ENCODE measurements at regions of chr14 and their contacts with region 1.

Region 1: DNA sequence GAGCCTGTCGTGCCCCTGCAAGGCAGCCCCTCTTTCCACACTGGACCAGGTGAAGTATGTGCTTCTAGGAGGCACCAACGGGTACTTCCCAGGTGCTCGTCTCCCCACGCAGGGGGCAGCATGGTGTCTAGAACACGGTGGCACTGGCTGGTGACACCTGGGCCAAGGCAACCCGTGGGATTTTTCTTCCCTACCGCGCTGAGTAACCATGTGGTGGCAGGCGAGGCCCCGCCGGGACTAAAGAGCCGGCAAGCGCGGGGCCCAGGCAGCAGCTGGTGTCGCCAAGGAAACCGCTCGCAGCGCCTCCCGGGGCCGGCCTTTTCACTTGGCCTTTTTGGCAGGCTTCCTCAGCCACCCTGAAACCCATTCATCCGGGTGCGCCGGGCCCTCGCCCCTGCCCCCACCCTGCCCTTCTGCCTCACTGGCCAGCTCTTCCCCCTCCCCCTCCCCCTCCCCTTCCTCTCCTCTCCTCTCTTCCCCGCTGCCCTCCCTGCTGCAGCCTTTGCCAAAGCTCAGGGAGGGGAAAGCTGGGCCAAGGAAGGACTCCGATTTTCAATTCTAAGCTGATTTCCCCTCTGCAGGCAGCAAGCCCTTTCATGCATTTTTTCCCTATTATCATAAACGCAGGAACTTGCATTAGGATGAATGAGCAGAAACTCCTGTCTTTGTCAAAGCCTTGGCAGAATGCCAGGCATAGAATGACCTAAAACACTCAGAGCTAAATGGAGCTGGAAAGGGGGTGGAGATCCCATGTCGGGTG is 81.2 kb downstream of the IRF2BPL start:
- DNase-seq: peak; percentile 69
- ATAC-seq: peak; percentile 93
- H3K4me3 Mint-ChIP-seq: peak overlapping the region; percentile 19
- H3K27ac Mint-ChIP-seq: no peak overlapping the region
- H3K4me1 Mint-ChIP-seq: peaks cover 19% of the 10 kb centered on the region
- H3K27me3 Mint-ChIP-seq: no peaks in the 10 kb centered on the region
- CTCF ChIP-seq: no peak

Region 2: GRCh38 chr14:76829650-76830421 is 117.4 kb before region 1 on chr14:
- CTCF ChIA-PET with region 1: no interaction called
- POLR2A ChIA-PET with region 1: no interaction called
- intact Hi-C with region 1: no loop called
- DNase-seq: no peak
- ATAC-seq: no peak
- H3K4me3 Mint-ChIP-seq: no peak overlapping the region
- H3K27ac Mint-ChIP-seq: no peak overlapping the region
- H3K4me1 Mint-ChIP-seq: no peaks in the 10 kb centered on the region
- H3K27me3 Mint-ChIP-seq: peaks cover 17% of the 10 kb centered on the region
- CTCF ChIP-seq: no peak

Region 3: GRCh38 chr14:76918751-76919543 is 28.3 kb before region 1 on chr14:
- CTCF ChIA-PET with region 1: interaction called, 11 read pairs
- POLR2A ChIA-PET with region 1: no interaction called
- intact Hi-C with region 1: no loop called
- DNase-seq: no peak
- ATAC-seq: no peak
- H3K4me3 Mint-ChIP-seq: no peak overlapping the region
- H3K27ac Mint-ChIP-seq: no peak overlapping the region
- H3K4me1 Mint-ChIP-seq: peaks cover 25% of the 10 kb centered on the region
- H3K27me3 Mint-ChIP-seq: peaks cover 15% of the 10 kb centered on the region
- CTCF ChIP-seq: no peak

Region 4: DNA sequence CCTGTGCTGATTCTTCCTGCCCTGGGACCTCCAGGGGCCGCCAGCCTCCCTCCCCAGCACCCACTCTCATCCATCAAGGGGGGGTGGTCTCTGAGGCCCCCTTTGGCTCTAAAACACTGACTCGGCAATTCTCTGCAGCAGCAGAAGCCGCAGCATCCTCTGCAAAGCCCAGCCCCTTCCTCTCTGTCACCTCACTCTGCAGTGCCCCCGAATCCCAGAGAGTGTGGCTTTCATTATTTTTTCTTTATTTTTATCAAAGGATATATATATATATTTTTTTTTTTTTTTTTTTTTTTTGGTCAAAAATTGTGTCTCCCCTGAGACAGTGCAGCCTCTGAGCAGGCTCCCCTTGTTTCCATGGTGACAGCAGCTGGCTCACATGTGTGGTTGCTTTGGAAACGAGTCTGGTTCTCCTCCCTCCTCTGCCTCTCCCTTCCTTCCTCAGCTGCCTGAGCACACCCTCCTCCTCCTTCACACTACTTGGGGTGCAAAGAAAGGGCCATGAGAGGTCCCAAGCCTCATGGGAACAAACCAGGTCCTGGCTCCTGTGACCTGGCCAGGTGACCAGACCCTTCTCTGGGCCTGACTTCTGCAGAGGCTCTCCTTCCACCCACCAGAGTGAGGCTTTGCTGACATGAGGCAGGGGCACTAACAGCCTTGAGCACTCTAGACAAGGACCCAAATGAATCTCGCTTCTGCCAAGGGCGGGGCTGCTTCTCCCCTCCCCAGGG is 20.6 kb before region 1 on chr14:
- CTCF ChIA-PET with region 1: no interaction called
- POLR2A ChIA-PET with region 1: no interaction called
- intact Hi-C with region 1: loop called (anchors 2 kb)
- DNase-seq: no peak
- ATAC-seq: peak; percentile 88
- H3K4me3 Mint-ChIP-seq: no peak overlapping the region
- H3K27ac Mint-ChIP-seq: no peak overlapping the region
- H3K4me1 Mint-ChIP-seq: peaks cover 38% of the 10 kb centered on the region
- H3K27me3 Mint-ChIP-seq: peaks cover 10% of the 10 kb centered on the region
- CTCF ChIP-seq: no peak

Region 5: DNA sequence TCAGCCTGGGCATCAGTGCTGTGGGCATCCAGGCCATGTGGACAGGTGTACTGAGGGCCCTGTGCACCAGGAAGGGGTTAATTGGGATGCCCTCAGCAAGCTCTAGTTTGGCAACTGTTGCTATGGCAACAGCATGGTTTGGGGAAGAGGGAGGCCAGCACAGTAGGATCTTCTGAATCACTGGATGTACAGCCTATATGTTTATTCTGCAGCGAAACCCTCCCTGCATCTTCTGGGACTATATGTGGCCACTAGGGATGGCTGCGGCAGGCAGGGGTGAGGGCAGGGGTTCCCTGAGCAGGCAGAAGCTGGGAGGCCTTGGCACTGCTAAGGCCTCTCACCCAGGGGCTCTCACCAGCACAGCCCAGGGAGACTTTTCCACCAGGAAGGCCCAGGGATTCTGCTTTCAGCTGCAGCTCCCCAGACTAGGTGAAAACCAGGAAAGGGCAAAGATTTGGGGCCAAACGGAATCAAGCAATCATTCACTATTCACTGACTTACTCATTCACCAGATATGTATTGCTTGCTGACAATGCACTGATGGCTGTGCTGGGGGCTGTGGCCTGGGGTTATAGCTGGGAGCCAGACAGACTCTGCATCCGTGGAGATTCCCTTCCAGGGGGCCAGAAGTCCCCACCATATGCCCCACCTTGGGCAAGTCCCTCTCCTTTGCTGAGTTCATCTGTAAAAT is 38.4 kb after region 1 on chr14:
- CTCF ChIA-PET with region 1: no interaction called
- POLR2A ChIA-PET with region 1: no interaction called
- intact Hi-C with region 1: loop called (anchors 5 kb)
- DNase-seq: no peak
- ATAC-seq: no peak
- H3K4me3 Mint-ChIP-seq: no peak overlapping the region
- H3K27ac Mint-ChIP-seq: no peak overlapping the region
- H3K4me1 Mint-ChIP-seq: peaks cover 7% of the 10 kb centered on the region
- H3K27me3 Mint-ChIP-seq: no peaks in the 10 kb centered on the region
- CTCF ChIP-seq: no peak

Region 6: GRCh38 chr14:77053046-77053841 is 106.0 kb after region 1 on chr14:
- CTCF ChIA-PET with region 1: interaction called, 28 read pairs
- POLR2A ChIA-PET with region 1: interaction called, 6 read pairs
- intact Hi-C with region 1: loop called (anchors 1 kb)
- DNase-seq: peak; percentile 79
- ATAC-seq: peak; percentile 90
- H3K4me3 Mint-ChIP-seq: no peak overlapping the region
- H3K27ac Mint-ChIP-seq: peak overlapping the region; percentile 24
- H3K4me1 Mint-ChIP-seq: peaks cover 8% of the 10 kb centered on the region
- H3K27me3 Mint-ChIP-seq: no peaks in the 10 kb centered on the region
- CTCF ChIP-seq: peak; percentile 74